OCI-LY7 (cell line): ENCODE measurements at regions of chr3 and their contacts with region 1.

Region 1: GRCh38 chr3:194806991-194807630 is 121.4 kb downstream of the FAM43A start:
- DNase-seq: no peak
- H3K4me3 ChIP-seq: no peak overlapping the region
- H3K27ac ChIP-seq: no peak overlapping the region
- H3K4me1 ChIP-seq: peaks cover 17% of the 10 kb centered on the region
- CTCF ChIP-seq: no peak

Region 2: GRCh38 chr3:194784361-194784760 is 22.8 kb before region 1 on chr3:
- CTCF ChIA-PET with region 1: no interaction called
- POLR2A ChIA-PET with region 1: interaction called, 4 read pairs
- intact Hi-C with region 1: loop called (anchors 1 kb)
- DNase-seq: no peak
- H3K4me3 ChIP-seq: no peak overlapping the region
- H3K27ac ChIP-seq: no peak overlapping the region
- H3K4me1 ChIP-seq: no peaks in the 10 kb centered on the region
- CTCF ChIP-seq: no peak